Astrocyte of the cerebellum (primary cell): ENCODE measurements at regions of chr12 and their contacts with region 1.

Region 1: GRCh38 chr12:111268738-111269572 is 99.9 kb downstream of the PHETA1 start:
- DNase-seq: no peak
- H3K4me3 ChIP-seq: no peak overlapping the region
- CTCF ChIP-seq: peak; percentile 49

Region 2: DNA sequence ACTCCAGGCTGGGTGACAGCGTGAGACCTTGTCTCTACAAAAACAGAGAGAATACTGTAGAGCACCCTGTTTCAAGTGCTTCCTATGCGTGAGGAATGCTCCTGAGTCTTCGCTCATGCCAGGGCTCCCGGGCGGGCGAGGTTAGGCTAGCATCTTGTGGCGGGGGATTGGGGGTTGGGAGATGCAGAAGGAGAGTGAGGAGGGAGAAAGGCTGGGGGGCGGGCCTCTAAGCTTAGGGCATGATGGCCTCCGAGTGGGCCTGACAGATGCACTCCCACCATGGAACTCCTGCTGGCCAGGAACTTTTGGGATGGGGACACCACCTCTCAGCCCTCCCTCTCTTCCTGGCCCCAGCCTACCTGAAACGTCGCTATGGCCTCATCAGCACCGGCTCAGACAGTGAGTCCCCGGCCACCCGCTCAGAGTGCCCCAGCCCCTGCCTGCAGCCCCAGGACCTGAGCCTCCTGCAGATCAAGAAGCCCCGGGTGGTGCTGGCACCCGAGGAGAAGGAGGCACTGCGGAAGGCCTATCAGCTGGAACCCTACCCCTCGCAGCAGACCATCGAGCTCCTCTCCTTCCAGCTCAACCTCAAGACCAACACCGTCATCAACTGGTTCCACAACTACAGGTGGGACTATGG is 72.6 kb after region 1 on chr12:
- in situ Hi-C with region 1: loop called (anchors 10 kb)
- DNase-seq: no peak
- H3K4me3 ChIP-seq: no peak overlapping the region
- CTCF ChIP-seq: no peak

Region 3: GRCh38 chr12:111792155-111792855 is 523.4 kb after region 1 on chr12:
- in situ Hi-C with region 1: no loop called
- DNase-seq: no peak
- H3K4me3 ChIP-seq: no peak overlapping the region
- CTCF ChIP-seq: no peak